Posterior vena cava (tissue), 2 donors: ENCODE measurements at regions of chr17 and their contacts with region 1.

Region 1: GRCh38 chr17:64025732-64026294 is 5.4 kb upstream of the ICAM2 start:
- DNase-seq: peak; percentile 92

Region 2: GRCh38 chr17:63919311-63919723 is 106.5 kb before region 1 on chr17:
- intact Hi-C with region 1: loop called in 1 of 2 experiments (anchors 10 kb)
- DNase-seq: no peak

Region 3: GRCh38 chr17:63931099-63931561 is 94.7 kb before region 1 on chr17:
- intact Hi-C with region 1: loop called in 1 of 2 experiments (anchors 10 kb)
- DNase-seq: peak; percentile 89

Region 4: GRCh38 chr17:63974594-63975192 is 51.1 kb before region 1 on chr17:
- intact Hi-C with region 1: no loop called
- DNase-seq: no peak

Region 5: DNA sequence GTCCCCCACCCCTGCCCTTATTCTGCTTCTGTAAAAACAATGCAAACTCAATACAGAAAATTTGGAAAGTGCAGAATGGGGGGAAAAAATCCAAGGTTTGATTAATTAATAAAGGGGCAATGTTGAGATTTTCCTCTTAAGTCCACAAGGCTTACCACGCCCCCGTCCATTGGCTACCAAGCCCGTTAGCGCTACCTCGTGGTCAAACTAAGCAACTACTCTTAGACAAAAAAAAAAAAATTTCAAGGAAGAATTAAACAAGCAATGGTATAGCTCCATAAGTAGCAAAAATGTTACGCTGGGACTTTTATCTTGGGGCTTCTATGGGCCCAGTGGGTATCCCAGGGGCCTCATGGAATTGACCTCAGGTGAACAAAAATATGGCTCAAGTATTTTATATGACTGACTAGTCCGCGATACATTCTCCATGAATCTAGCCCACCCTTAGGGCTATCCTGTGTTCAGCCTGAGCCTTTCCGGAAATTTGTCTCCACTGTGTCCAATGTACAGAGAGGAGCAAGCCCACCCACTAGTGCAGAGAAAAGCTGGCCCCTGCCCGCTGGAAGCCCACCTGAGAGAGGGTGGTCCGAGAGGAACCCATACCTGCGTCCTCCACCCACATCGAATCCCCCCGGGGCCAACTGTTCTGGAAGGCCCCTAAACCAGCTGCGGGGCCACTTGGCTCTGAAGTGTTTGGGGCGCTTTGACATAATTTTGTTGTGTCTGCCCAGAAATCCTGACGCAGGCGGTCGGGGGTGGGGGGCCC is 256.3 kb after region 1 on chr17:
- intact Hi-C with region 1: loop called in 1 of 2 experiments (anchors 10 kb)
- DNase-seq: no peak